Activated B cell treated with CpG ODN at 0.5 μM for 24 hours (primary cell): ENCODE measurements at regions of chr4 and their contacts with region 1.

Region 1: DNA sequence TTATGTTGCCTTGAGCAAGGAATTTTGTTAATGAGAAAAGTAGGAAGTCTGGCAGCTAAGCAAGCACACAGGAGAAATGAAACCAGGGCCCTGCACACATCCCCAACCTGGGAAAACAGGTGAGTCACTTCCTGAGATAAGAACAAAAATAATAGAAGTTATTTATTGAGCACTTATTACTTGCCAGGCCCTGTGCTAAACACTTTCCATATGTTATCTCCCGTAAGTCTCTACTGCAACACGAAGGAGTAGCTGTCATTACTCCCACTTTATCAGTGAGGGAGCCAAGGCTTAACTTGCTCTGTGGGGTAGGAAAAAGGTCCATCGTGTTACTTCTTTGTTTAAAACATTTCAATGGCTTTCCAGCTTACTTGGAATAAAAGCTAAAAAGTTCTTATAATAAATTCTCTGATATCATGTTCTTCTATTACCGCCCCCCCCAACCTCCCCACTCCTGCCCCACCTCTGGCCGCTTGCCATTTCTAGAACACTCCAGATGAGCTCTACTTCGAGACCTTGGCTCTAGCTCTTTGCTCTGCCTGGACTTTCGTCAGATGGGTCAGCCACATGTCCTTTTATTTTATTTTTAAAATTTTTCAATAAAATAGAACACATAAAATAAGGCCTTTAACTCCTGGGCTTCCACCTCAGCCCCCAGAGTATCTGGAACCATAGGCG is 36.3 kb upstream of the PLAC8 start:
- DNase-seq: no peak
- ATAC-seq: no peak
- H3K4me3 Mint-ChIP-seq: no peak overlapping the region
- H3K27ac Mint-ChIP-seq: no peak overlapping the region
- H3K4me1 Mint-ChIP-seq: peaks cover 45% of the 10 kb centered on the region
- H3K27me3 Mint-ChIP-seq: no peaks in the 10 kb centered on the region
- CTCF ChIP-seq: no peak

Region 2: DNA sequence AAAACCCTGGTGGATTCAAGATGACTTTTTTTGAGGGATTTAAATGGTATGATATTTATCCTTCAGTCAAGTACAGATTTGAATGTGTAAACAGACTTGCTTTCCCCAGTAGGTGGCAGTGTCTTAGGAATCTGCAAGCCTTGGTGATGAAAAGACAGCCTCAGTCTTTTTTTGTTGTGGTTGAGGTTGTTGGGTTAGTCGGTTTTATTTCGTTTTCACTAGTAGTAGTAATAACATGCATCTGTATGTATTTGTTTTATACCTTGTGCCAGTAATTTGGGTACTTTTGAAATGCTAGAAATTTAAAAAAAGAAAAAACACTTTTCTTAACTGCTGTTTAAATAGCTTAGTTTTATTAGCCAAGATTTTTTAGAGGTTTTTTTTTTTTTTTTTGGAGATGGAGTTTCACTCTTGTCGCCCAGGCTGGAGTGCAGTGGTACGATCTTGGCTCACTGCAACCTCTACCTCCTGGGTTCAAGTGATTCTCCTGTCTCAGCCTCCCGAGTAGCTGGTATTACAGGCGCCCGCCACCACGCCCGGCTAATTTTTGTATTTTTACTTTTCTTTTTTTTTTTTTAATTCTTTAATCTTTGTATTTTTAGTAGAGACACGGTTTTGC is 76.6 kb before region 1 on chr4:
- CTCF ChIA-PET with region 1: interaction called, 11 read pairs
- POLR2A ChIA-PET with region 1: no interaction called
- intact Hi-C with region 1: no loop called
- DNase-seq: no peak
- ATAC-seq: peak; percentile 81
- H3K4me3 Mint-ChIP-seq: peak overlapping the region; percentile 53
- H3K27ac Mint-ChIP-seq: peak overlapping the region; percentile 76
- H3K4me1 Mint-ChIP-seq: peaks cover 26% of the 10 kb centered on the region
- H3K27me3 Mint-ChIP-seq: no peaks in the 10 kb centered on the region
- CTCF ChIP-seq: peak; percentile 52

Region 3: GRCh38 chr4:83083925-83084475 is 66.8 kb before region 1 on chr4:
- CTCF ChIA-PET with region 1: interaction called, 12 read pairs
- POLR2A ChIA-PET with region 1: interaction called, 3 read pairs
- intact Hi-C with region 1: loop called (anchors 2 kb)
- DNase-seq: peak; percentile 33
- ATAC-seq: peak; percentile 96
- H3K4me3 Mint-ChIP-seq: peak overlapping the region; percentile 57
- H3K27ac Mint-ChIP-seq: peak overlapping the region; percentile 90
- H3K4me1 Mint-ChIP-seq: peaks cover 50% of the 10 kb centered on the region
- H3K27me3 Mint-ChIP-seq: no peaks in the 10 kb centered on the region
- CTCF ChIP-seq: no peak

Region 4: DNA sequence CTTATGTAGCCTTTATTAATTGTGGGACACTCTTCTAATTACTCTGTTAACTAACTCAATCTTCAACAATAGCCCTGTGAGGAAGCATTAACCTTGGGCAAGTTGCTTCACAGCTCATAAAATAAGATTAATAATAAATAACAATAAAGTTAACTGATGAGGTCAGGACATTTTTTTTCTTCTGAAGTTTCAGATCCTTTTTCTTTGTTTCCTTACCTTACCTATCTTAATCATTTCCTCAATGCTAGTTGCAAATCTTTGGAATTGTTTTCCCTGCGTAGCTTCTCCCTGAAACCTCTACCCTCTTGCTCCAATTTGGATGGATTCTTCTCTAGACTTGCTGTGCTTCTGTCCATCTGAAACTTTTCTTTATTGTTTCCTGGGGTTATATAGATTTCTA is 18.7 kb before region 1 on chr4:
- CTCF ChIA-PET with region 1: no interaction called
- POLR2A ChIA-PET with region 1: interaction called, 5 read pairs
- intact Hi-C with region 1: loop called (anchors 1 kb)
- DNase-seq: no peak
- ATAC-seq: peak; percentile 10
- H3K4me3 Mint-ChIP-seq: no peak overlapping the region
- H3K27ac Mint-ChIP-seq: peak overlapping the region; percentile 33
- H3K4me1 Mint-ChIP-seq: peaks cover 39% of the 10 kb centered on the region
- H3K27me3 Mint-ChIP-seq: no peaks in the 10 kb centered on the region
- CTCF ChIP-seq: no peak